Activated CD8-positive, alpha-beta T cell treated with anti-CD3 and anti-CD28 coated beads, Interleukin-2, amount 10 ng/mL, durations not matched to agents 7 days and 5 days (primary cell): ENCODE measurements at regions of chr3 and their contacts with region 1.

Region 1: GRCh38 chr3:149129326-149130205 is at the start of gene HPS3:
- DNase-seq: peak; percentile 89
- ATAC-seq: peak; percentile 94
- H3K4me3 Mint-ChIP-seq: peak within 1 kb of the TSS; percentile 89
- H3K27ac Mint-ChIP-seq: peak within 1 kb of the TSS; percentile 88
- H3K4me1 Mint-ChIP-seq: peaks cover 34% of the 10 kb centered on the region
- H3K27me3 Mint-ChIP-seq: peaks cover 7% of the 10 kb centered on the region
- total RNA-seq, gene HPS3: 26.8 to 29.0 TPM

Region 2: GRCh38 chr3:149174901-149175300 is 45.3 kb after region 1 on chr3:
- CTCF ChIA-PET with region 1: no interaction called
- POLR2A ChIA-PET with region 1: no interaction called
- DNase-seq: peak; percentile 41
- ATAC-seq: peak; percentile 36
- H3K4me3 Mint-ChIP-seq: no peak overlapping the region
- H3K27ac Mint-ChIP-seq: no peak overlapping the region
- H3K4me1 Mint-ChIP-seq: peaks cover 12% of the 10 kb centered on the region
- H3K27me3 Mint-ChIP-seq: no peaks in the 10 kb centered on the region

Region 3: DNA sequence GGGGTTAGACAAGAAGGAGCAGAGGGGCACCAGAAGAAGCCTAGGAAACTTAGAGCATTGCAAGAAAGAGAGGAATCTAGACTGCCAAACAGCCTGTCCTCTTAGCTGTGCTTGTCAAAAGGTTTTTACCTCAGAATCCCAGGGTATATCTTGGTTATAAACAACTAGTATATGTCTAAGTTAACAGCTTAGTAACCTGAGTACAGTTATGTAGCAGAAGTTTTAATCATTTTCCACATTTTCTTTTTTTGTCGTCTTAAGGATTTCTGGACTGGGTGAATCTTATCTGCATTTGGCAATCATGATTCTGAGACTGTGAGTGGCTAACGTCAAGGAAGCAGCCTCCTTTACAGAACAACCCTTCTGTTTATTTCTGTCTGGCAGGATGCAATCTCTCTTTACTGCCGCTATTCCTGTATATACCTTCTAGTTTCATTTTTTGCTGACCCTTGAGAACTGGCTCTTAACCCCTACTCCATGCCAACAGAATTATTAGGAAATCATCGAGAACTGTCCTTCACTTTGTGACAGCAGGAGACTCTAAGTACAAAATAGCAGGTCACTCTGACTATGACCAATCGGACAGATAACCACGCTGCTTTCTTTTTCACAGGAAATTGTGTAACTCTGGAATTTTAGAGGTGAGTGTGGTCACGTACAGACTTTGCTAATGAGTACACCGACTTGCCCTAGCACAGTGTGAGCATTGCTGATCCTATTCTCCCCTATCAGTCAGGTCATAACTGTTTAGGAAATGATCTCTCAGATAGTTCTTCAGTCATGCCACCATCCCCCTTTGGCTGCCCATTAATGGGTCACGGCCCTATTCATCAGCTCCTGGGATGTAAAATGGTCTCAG is 95.4 kb after region 1 on chr3:
- CTCF ChIA-PET with region 1: no interaction called
- POLR2A ChIA-PET with region 1: no interaction called
- DNase-seq: peak; percentile 42
- ATAC-seq: peak; percentile 89
- H3K4me3 Mint-ChIP-seq: peak overlapping the region; percentile 69
- H3K27ac Mint-ChIP-seq: peak overlapping the region; percentile 62
- H3K4me1 Mint-ChIP-seq: peaks cover 25% of the 10 kb centered on the region
- H3K27me3 Mint-ChIP-seq: peaks cover 4% of the 10 kb centered on the region

Region 4: GRCh38 chr3:149273096-149273751 is 143.7 kb after region 1 on chr3:
- CTCF ChIA-PET with region 1: interaction called, 37 read pairs
- POLR2A ChIA-PET with region 1: interaction called, 3 read pairs
- DNase-seq: peak; percentile 54
- ATAC-seq: peak; percentile 70
- H3K4me3 Mint-ChIP-seq: no peak overlapping the region
- H3K27ac Mint-ChIP-seq: no peak overlapping the region
- H3K4me1 Mint-ChIP-seq: peaks cover 15% of the 10 kb centered on the region
- H3K27me3 Mint-ChIP-seq: peaks cover 3% of the 10 kb centered on the region